Ovary (tissue), 10 donors: ENCODE measurements at regions of chr18 and their contacts with region 1.

Region 1: DNA sequence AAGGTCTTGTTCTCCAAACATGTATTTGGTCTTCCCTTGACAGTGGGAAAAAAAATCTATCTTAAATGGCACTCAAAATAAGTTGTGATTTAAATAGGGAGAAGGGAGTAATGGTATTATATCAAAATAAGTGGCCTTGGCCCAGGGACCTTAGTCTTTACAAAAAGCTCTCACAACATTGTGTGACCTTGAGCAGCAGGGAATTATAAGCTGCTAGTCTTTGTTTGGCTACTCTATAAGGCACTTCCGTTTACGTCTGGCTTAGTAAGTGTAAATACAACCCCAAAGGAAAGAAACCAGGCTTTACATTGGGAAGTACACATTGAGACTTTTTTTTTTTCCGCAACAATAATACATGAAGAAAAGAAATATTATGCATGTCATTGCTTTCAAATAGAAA is 734.0 kb upstream of the LINC00305 start:
- DNase-seq: no peak
- H3K4me3 ChIP-seq: no peak overlapping the region
- H3K27ac ChIP-seq: no peak overlapping the region
- H3K4me1 ChIP-seq: no peaks in the 10 kb centered on the region
- H3K27me3 ChIP-seq: no peaks in the 10 kb centered on the region
- CTCF ChIP-seq: no peak
- EP300 ChIP-seq: no peak
- POLR2A ChIP-seq: no peak

Region 2: DNA sequence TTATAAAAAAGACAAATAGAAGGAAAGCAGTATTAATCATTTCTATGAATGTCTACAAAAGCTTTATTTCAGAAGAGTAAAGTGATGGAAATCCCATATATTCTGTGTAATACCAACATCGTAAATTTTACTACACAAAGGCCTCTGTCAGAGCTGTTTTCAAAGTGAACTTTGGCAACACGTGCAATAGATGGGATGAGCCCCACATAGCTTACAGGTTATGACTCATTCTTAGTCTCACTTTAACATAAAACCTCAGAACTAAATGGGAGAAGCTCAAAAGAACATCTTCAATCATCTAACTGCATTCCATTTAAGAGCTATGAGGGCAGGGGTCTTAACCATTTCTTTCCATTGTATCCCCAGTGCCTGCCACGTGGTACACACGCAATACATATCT is 1472.1 kb before region 1 on chr18:
- intact Hi-C with region 1: no loop called
- DNase-seq: no peak
- H3K4me3 ChIP-seq: no peak overlapping the region
- H3K27ac ChIP-seq: no peak overlapping the region
- H3K4me1 ChIP-seq: no peaks in the 10 kb centered on the region
- H3K27me3 ChIP-seq: no peaks in the 10 kb centered on the region
- CTCF ChIP-seq: no peak
- EP300 ChIP-seq: no peak
- POLR2A ChIP-seq: no peak

Region 3: GRCh38 chr18:65025756-65026155 is 142.9 kb after region 1 on chr18:
- intact Hi-C with region 1: no loop called
- DNase-seq: no peak
- H3K4me3 ChIP-seq: no peak overlapping the region
- H3K27ac ChIP-seq: no peak overlapping the region
- H3K4me1 ChIP-seq: no peaks in the 10 kb centered on the region
- H3K27me3 ChIP-seq: no peaks in the 10 kb centered on the region
- CTCF ChIP-seq: no peak
- EP300 ChIP-seq: no peak
- POLR2A ChIP-seq: no peak

Region 4: GRCh38 chr18:65287652-65288051 is 404.8 kb after region 1 on chr18:
- intact Hi-C with region 1: no loop called
- DNase-seq: no peak
- H3K4me3 ChIP-seq: no peak overlapping the region
- H3K27ac ChIP-seq: no peak overlapping the region
- H3K4me1 ChIP-seq: no peaks in the 10 kb centered on the region
- H3K27me3 ChIP-seq: no peaks in the 10 kb centered on the region
- CTCF ChIP-seq: no peak
- EP300 ChIP-seq: no peak
- POLR2A ChIP-seq: no peak

Region 5: DNA sequence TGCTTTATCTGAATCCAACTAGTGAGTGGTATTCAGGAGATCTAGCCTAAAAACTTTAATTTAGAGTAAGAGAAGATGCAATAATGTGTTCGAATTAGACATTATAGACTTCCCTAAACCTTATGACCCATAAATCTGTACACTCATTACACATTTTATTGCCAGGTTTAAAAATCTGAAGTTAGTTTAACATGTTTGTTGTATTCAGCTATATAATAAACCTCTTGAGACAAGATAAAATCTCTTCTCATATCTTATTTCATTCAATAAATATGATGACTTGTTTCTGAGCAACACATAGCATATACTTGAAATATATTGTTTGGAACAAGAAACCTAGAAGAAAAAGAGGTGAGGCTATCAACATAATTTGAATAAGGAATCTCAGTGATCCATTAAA is 1018.6 kb after region 1 on chr18:
- intact Hi-C with region 1: no loop called
- DNase-seq: no peak
- H3K4me3 ChIP-seq: no peak overlapping the region
- H3K27ac ChIP-seq: no peak overlapping the region
- H3K4me1 ChIP-seq: no peaks in the 10 kb centered on the region
- H3K27me3 ChIP-seq: no peaks in the 10 kb centered on the region
- CTCF ChIP-seq: no peak
- EP300 ChIP-seq: no peak
- POLR2A ChIP-seq: no peak

Region 6: GRCh38 chr18:66778048-66778447 is 1895.2 kb after region 1 on chr18:
- intact Hi-C with region 1: loop called in 1 of 4 experiments (anchors 5 kb)
- DNase-seq: no peak
- H3K4me3 ChIP-seq: no peak overlapping the region
- H3K27ac ChIP-seq: no peak overlapping the region
- H3K4me1 ChIP-seq: no peaks in the 10 kb centered on the region
- H3K27me3 ChIP-seq: no peaks in the 10 kb centered on the region
- CTCF ChIP-seq: no peak
- EP300 ChIP-seq: no peak
- POLR2A ChIP-seq: no peak